AG04450 (cell line): ENCODE measurements at regions of chr3 and their contacts with region 1.

Region 1: GRCh38 chr3:71245971-71246880 is 337.3 kb downstream of the FOXP1 start:
- DNase-seq: no peak
- H3K4me3 ChIP-seq: peak overlapping the region; percentile 32
- H3K27ac ChIP-seq: peak overlapping the region; percentile 57
- H3K27me3 ChIP-seq: no peaks in the 10 kb centered on the region
- CTCF ChIP-seq: no peak

Region 2: DNA sequence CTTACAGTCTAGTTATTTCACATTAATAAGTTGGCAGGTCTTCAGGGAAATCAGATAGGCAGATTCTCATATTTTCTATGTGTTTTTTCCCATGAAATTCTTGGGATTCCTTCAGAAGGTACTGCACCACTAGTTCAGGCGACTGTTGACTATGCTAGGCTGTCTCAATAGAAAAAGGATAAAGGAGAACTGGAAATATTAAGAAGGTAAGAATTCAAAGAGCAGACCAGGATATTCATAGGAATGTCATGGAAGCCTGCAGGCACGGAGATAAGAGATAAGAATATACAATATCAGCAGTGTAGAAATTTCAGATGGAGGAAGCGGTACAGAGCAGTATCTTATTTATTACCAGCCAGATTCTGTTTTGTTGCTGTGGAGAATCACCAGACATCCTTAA is 501.7 kb before region 1 on chr3:
- CTCF ChIA-PET with region 1: no interaction called
- POLR2A ChIA-PET with region 1: no interaction called
- DNase-seq: no peak
- H3K4me3 ChIP-seq: no peak overlapping the region
- H3K27ac ChIP-seq: no peak overlapping the region
- H3K27me3 ChIP-seq: no peaks in the 10 kb centered on the region
- CTCF ChIP-seq: no peak

Region 3: DNA sequence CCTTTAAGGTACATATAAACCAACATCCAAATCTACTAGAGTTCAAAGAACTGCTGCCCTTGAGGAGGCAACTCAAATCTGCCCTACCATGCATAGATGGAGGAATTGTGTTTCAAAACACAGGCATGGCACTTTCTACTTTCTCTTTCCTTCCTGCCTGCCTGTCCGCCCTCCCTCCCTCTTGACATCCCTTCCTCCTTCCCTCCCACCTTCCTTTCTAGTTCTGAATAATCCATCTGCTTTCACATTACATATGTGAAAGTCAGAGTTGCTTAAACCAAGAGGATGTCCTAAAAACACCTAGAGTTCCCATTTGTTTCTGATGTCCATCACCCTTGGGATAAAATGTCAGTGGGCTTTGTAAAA is 200.3 kb before region 1 on chr3:
- CTCF ChIA-PET with region 1: no interaction called
- POLR2A ChIA-PET with region 1: no interaction called
- DNase-seq: no peak
- H3K4me3 ChIP-seq: no peak overlapping the region
- H3K27ac ChIP-seq: no peak overlapping the region
- H3K27me3 ChIP-seq: no peaks in the 10 kb centered on the region
- CTCF ChIP-seq: no peak

Region 4: GRCh38 chr3:71201939-71202338 is 44.3 kb before region 1 on chr3:
- CTCF ChIA-PET with region 1: no interaction called
- POLR2A ChIA-PET with region 1: no interaction called
- DNase-seq: no peak
- H3K4me3 ChIP-seq: no peak overlapping the region
- H3K27ac ChIP-seq: no peak overlapping the region
- H3K27me3 ChIP-seq: no peaks in the 10 kb centered on the region
- CTCF ChIP-seq: no peak

Region 5: DNA sequence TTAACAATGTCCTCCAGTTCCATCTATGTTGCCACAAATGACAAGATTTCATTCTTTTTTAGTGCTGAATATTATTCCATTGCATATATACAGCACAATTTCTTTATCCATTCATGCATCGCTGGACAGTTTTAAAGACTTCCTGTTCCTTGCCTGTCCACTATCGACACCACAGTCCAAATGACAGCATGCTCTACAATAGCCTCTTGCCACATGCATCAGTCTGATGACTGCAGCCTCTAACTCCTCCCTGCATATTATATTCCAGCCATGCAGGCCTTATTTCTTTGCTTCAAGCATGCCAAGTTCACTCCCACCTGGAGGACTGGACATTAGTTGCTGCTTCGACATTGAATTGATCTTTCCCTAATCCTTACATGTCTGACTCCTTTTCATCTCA is 31.1 kb after region 1 on chr3:
- CTCF ChIA-PET with region 1: interaction called, 13 read pairs
- POLR2A ChIA-PET with region 1: no interaction called
- DNase-seq: no peak
- H3K4me3 ChIP-seq: no peak overlapping the region
- H3K27ac ChIP-seq: no peak overlapping the region
- H3K27me3 ChIP-seq: no peaks in the 10 kb centered on the region
- CTCF ChIP-seq: no peak